GM12878 (cell line): ENCODE measurements at regions of chr7 and their contacts with region 1.

Region 1: GRCh38 chr7:129376076-129376777 is 58.0 kb upstream of the STRIP2 start:
- DNase-seq: no peak
- ATAC-seq: peak; percentile 98
- H3K4me3 ChIP-seq: no peak overlapping the region
- H3K27ac ChIP-seq: no peak overlapping the region
- H3K4me1 ChIP-seq: peaks cover 8% of the 10 kb centered on the region; the same call in 1 of the 2 replicates
- H3K27me3 ChIP-seq: no peaks in the 10 kb centered on the region
- CTCF ChIP-seq: peak; percentile 74 to 81 (median 77)
- EP300 ChIP-seq: no peak
- POLR2A ChIP-seq: no peak
- RAD21 ChIP-seq: peak; percentile 52

Region 2: GRCh38 chr7:129298268-129298893 is 77.8 kb before region 1 on chr7:
- CTCF ChIA-PET with region 1: interaction called, 20 read pairs
- POLR2A ChIA-PET with region 1: no interaction called
- RAD21 ChIA-PET with region 1: no interaction called
- SMC1A ChIA-PET with region 1: interaction called, 4 read pairs
- in situ Hi-C with region 1: no loop called
- intact Hi-C with region 1: no loop called
- DNase-seq: no peak
- ATAC-seq: peak; percentile 48; the same call in 2 of the 3 replicates
- H3K4me3 ChIP-seq: no peak overlapping the region
- H3K27ac ChIP-seq: no peak overlapping the region
- H3K4me1 ChIP-seq: no peaks in the 10 kb centered on the region
- H3K27me3 ChIP-seq: no peaks in the 10 kb centered on the region
- CTCF ChIP-seq: peak; percentile 71 to 76 (median 76)
- EP300 ChIP-seq: no peak
- POLR2A ChIP-seq: no peak
- RAD21 ChIP-seq: peak; percentile 78

Region 3: DNA sequence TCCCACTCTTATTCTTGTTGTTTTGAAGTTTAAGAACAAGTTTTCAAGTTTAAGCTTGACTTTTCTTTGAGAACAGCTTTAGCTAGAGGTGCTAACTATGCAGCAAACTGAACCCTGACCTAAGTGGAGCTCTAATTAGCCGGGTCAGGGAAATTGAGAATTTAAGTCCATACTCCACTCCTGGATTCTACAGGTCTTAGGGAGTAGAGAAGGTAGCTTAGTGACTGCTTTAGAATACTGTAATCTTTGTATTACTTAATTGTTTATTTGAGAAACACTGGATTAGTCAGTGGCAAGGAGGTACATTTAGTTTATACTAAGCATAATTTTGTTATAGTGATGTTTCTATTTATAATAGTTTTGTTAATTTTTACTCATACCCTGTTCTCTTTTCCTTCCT is 16.6 kb before region 1 on chr7:
- CTCF ChIA-PET with region 1: interaction called, 73 read pairs
- POLR2A ChIA-PET with region 1: no interaction called
- RAD21 ChIA-PET with region 1: interaction called, 9 read pairs
- SMC1A ChIA-PET with region 1: interaction called, 55 read pairs
- in situ Hi-C with region 1: no loop called
- intact Hi-C with region 1: no loop called
- DNase-seq: no peak
- ATAC-seq: no peak
- H3K4me3 ChIP-seq: no peak overlapping the region
- H3K27ac ChIP-seq: no peak overlapping the region
- H3K4me1 ChIP-seq: no peaks in the 10 kb centered on the region; the same call in none of the 2 replicates
- H3K27me3 ChIP-seq: no peaks in the 10 kb centered on the region
- CTCF ChIP-seq: no peak
- EP300 ChIP-seq: no peak
- POLR2A ChIP-seq: no peak
- RAD21 ChIP-seq: no peak

Region 4: DNA sequence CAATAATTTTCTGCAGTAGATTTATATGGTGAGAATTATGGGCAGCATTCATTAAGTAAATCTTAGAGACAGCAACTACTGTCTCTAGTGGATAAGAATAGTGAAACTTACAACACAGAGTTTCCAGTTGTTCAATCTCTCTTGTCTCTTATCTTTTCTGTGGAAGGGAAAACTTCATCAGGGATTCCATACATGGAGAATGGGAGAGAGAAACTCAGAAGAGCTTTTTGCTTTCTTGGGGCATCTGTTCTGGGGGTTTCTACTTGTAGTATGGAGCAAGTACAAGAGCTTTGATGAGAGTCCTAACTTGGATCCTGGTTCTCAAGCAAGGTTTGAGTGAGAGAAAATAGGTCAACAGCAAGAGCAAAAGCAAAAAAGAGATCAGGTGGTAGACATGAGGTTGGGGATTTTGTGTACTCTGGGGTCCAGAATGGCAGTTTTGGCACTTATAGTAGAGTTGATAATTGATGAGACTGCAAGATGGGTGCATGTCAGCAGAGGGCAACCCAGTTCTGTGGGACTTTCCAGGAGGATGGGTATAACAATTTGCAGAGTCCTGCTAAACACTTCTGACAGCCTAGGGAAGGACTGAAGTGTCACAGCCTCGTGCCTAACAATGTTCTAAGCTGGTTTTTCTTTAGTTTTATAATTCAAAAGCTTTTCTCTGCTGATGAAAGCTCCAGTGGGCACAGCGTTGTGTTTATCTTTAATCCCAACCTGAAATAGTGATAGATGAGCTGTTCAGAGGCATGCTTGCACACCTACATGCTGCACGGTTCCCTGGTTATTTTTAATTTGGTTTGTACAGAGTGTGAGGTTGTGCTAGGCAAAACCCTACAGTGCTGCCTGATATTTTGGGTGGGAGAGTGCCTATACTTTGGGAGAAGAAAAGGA is 26.0 kb after region 1 on chr7:
- CTCF ChIA-PET with region 1: interaction called, 39 read pairs
- POLR2A ChIA-PET with region 1: interaction called, 6 read pairs
- RAD21 ChIA-PET with region 1: interaction called, 36 read pairs
- SMC1A ChIA-PET with region 1: interaction called, 50 read pairs
- in situ Hi-C with region 1: no loop called
- intact Hi-C with region 1: no loop called
- DNase-seq: peak; percentile 43
- ATAC-seq: peak; percentile 93
- H3K4me3 ChIP-seq: no peak overlapping the region
- H3K27ac ChIP-seq: peak overlapping the region; percentile 18; the same call in 1 of the 2 replicates
- H3K4me1 ChIP-seq: no peaks in the 10 kb centered on the region
- H3K27me3 ChIP-seq: no peaks in the 10 kb centered on the region
- CTCF ChIP-seq: peak; percentile 34 to 64 (median 37); a peak in 4 of 6 replicates
- EP300 ChIP-seq: peak; percentile 29 to 59; a peak in 2 of 4 replicates
- POLR2A ChIP-seq: no peak
- RAD21 ChIP-seq: peak; percentile 46

Region 5: GRCh38 chr7:129462420-129462819 is 86.2 kb after region 1 on chr7:
- CTCF ChIA-PET with region 1: interaction called, 12 read pairs
- POLR2A ChIA-PET with region 1: interaction called, 14 read pairs
- RAD21 ChIA-PET with region 1: interaction called, 3 read pairs
- SMC1A ChIA-PET with region 1: interaction called, 165 read pairs
- in situ Hi-C with region 1: no loop called
- intact Hi-C with region 1: no loop called
- DNase-seq: no peak
- ATAC-seq: no peak
- H3K4me3 ChIP-seq: no peak overlapping the region
- H3K27ac ChIP-seq: no peak overlapping the region
- H3K4me1 ChIP-seq: no peaks in the 10 kb centered on the region
- H3K27me3 ChIP-seq: no peaks in the 10 kb centered on the region
- CTCF ChIP-seq: no peak
- EP300 ChIP-seq: no peak
- POLR2A ChIP-seq: no peak
- RAD21 ChIP-seq: no peak

Region 6: GRCh38 chr7:129644634-129645230 is 268.5 kb after region 1 on chr7:
- CTCF ChIA-PET with region 1: interaction called, 28 read pairs
- POLR2A ChIA-PET with region 1: no interaction called
- RAD21 ChIA-PET with region 1: interaction called, 3 read pairs
- SMC1A ChIA-PET with region 1: interaction called, 3 read pairs
- in situ Hi-C with region 1: no loop called
- intact Hi-C with region 1: no loop called
- DNase-seq: no peak
- ATAC-seq: no peak
- H3K4me3 ChIP-seq: no peak overlapping the region
- H3K27ac ChIP-seq: no peak overlapping the region
- H3K4me1 ChIP-seq: peaks cover 5% of the 10 kb centered on the region; the same call in 1 of the 2 replicates
- H3K27me3 ChIP-seq: no peaks in the 10 kb centered on the region
- CTCF ChIP-seq: peak; percentile 7 to 42 (median 28); a peak in 3 of 6 replicates
- EP300 ChIP-seq: no peak
- POLR2A ChIP-seq: no peak
- RAD21 ChIP-seq: peak; percentile 49